ENCODE measurements at regions of chr11 and their contacts with region 1.

Region 1: GRCh38 chr11:17063171-17064002 is 14.1 kb downstream of the RPS13 start:
- DNase-seq: peak in 1 of 9 donors; percentile 65
- ATAC-seq: peak; percentile 67
- H3K4me3 ChIP-seq: no peak overlapping the region
- H3K4me3 Mint-ChIP-seq: no peak overlapping the region
- H3K27ac ChIP-seq: no peak overlapping the region
- H3K27ac Mint-ChIP-seq: no peak overlapping the region
- H3K4me1 ChIP-seq: no peaks in the 10 kb centered on the region
- H3K4me1 Mint-ChIP-seq: peaks cover 0 to 2% (median 0%) of the 10 kb centered on the region in 7 donors
- H3K27me3 ChIP-seq: no peaks in the 10 kb centered on the region
- H3K27me3 Mint-ChIP-seq: peaks cover 0 to 4% (median 0%) of the 10 kb centered on the region in 5 donors

Region 2: DNA sequence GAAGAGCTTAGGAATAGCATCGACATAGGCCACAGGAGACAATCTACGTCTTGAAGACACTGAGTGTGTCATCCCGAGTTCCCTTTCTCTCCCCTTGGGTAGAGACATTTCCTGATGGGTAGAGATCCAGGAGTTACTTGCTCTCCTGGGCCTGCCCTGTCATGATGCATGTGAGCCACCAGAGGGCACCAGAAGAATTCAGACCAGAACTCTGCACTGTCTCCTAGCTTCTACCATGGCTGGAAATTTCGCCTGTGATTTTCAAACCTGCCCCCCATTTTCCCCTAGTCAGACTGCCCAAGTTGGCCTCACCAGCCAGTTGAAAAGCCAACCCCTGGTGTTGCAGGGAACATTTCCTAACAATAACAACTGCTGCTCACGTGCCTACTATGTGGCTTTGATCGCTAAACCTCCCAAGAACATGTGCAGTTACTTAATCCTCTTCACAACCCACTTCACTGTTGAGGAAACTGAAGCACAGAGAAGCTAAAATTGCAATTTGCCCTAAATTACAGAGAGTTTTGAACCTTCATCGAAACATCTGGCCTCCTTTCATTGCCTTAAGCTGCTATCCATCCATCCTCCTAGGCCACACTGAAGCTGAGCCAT is 277.8 kb before region 1 on chr11:
- CTCF ChIA-PET with region 1: no interaction called
- POLR2A ChIA-PET with region 1: no interaction called
- intact Hi-C with region 1: loop called in 1 of 2 experiments (anchors 1 kb)
- DNase-seq: peak in 6 of 9 donors; percentile 24 to 50 (median 40)
- ATAC-seq: peak; percentile 83
- H3K4me3 ChIP-seq: no peak overlapping the region
- H3K4me3 Mint-ChIP-seq: no peak overlapping the region
- H3K27ac ChIP-seq: no peak overlapping the region
- H3K27ac Mint-ChIP-seq: no peak overlapping the region
- H3K4me1 ChIP-seq: no peaks in the 10 kb centered on the region
- H3K4me1 Mint-ChIP-seq: no peaks in the 10 kb centered on the region
- H3K27me3 ChIP-seq: no peaks in the 10 kb centered on the region
- H3K27me3 Mint-ChIP-seq: no peaks in the 10 kb centered on the region

Region 3: DNA sequence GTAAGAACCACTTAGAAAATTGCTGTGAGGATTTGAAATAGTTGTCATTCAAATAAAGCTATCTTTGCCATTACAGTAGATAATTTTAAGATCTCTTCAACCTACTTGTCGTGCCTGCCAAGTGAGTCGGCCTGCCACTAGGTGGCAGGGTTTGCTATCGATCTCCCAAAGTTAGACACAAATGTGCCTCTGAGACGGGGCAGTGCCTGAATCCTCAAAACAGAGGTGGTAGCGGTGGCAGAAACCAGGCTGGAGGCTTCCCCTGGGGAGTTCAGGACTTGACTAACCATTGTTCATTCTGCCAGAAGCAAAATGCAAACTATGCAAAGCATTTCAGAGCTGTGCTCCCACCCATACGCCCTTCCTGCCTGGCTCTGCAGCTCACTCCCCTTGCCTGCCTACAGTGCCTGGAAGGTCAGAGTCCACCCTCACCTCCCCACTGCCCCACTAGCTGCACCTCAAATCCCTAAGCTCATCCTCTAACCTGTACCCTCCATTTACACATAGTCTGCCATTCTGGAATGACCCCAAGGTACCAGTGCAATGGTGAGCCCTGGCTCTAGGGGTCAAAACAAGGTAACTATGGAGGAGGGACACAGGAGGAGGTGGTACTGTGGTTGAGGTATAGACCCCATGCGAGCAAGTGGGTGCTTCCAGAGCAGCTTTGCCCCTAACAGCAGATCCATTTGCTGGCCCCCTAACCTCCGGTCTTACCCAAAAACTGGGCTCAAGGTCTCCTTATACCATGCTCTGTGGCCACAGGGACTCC is 242.9 kb before region 1 on chr11:
- CTCF ChIA-PET with region 1: no interaction called
- POLR2A ChIA-PET with region 1: no interaction called
- intact Hi-C with region 1: loop called in 1 of 2 experiments (anchors 1 kb)
- DNase-seq: peak in 6 of 9 donors; percentile 6 to 30 (median 21)
- ATAC-seq: peak; percentile 64
- H3K4me3 ChIP-seq: no peak overlapping the region
- H3K4me3 Mint-ChIP-seq: no peak overlapping the region
- H3K27ac ChIP-seq: no peak overlapping the region
- H3K27ac Mint-ChIP-seq: no peak overlapping the region
- H3K4me1 ChIP-seq: no peaks in the 10 kb centered on the region
- H3K4me1 Mint-ChIP-seq: peaks cover 0 to 8% (median 0%) of the 10 kb centered on the region in 7 donors
- H3K27me3 ChIP-seq: no peaks in the 10 kb centered on the region
- H3K27me3 Mint-ChIP-seq: peaks cover 0 to 5% (median 0%) of the 10 kb centered on the region in 5 donors

Region 4: DNA sequence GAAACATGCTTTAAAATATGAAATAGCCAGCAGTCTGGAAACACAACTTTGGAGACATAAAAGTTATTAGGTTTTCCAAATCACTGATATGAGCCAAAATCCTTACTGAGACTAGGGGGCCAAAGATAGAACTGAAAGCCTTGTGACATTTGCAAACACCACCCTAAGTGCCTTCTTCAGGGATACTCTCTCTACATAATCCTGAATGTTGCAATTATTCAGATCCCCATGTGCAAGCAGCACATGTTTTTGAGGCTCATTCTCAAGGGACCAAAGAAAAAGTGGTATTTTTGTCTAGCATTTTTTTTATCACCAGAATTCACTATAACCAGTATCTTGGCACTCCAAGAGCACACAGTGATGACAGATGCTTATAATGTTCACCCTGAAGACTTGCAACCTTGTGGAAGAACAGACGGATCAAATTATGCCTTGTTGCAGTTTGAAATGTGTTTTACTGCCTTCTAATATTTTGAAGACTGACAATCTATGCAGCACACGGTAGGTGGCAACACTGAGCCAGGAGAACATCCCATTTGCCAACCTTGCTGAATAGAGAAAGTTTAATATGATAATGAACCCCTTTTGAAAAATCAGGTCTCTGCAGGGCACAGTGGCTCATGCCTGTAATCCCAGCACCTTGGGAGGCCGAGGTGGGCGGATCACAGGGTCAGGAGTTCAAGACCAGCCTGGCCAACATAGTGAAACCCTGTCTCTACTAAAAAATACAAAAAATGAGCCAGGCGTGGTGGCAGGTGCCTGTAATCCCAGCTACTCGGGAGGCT is 127.7 kb before region 1 on chr11:
- CTCF ChIA-PET with region 1: interaction called, 3 read pairs
- POLR2A ChIA-PET with region 1: no interaction called
- intact Hi-C with region 1: loop called (anchors 1 to 10 kb)
- DNase-seq: peak in 2 of 9 donors; percentile 3 to 6
- ATAC-seq: no peak
- H3K4me3 ChIP-seq: no peak overlapping the region
- H3K4me3 Mint-ChIP-seq: no peak overlapping the region
- H3K27ac ChIP-seq: no peak overlapping the region
- H3K27ac Mint-ChIP-seq: no peak overlapping the region
- H3K4me1 ChIP-seq: no peaks in the 10 kb centered on the region
- H3K4me1 Mint-ChIP-seq: no peaks in the 10 kb centered on the region
- H3K27me3 ChIP-seq: no peaks in the 10 kb centered on the region
- H3K27me3 Mint-ChIP-seq: peaks cover 0 to 20% (median 5%) of the 10 kb centered on the region in 5 donors

Region 5: DNA sequence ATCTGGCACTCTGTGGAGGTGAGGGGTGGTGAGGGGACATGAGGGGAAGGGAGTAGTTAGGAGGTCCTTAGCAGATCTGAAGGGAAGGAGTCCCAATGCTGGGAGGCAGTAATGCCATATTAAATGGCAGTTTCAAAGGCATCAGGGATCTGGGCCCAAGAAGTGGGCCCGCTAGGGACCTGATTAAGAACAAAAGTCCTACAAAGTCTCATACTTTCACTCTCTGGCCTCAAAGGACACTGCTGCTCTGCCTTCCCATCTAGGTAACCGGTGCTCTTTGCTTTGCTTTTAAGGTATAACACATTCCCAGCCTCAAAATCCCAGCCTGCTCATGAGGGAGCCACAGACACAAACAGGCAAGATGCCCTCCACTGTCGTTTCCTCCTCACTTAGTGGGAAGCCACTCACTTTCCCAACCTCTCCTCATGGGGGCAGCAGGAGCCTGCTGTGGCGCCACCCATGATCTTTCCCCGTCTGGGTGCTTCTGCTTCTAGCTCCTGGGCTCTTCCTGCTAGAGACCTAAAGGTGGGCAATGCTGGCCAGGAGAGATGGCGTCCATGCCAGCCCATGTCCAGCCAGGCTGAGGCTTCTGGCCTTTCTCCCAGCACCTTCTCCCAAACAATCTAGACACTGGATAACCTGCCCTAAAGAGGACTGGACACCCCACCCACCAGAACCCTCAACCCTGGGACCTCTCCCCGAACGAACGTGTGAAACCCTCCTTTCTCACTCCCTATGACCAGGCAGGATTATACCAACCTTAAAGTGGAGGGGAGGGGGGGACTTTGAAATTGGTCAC is 117.5 kb before region 1 on chr11:
- CTCF ChIA-PET with region 1: no interaction called
- POLR2A ChIA-PET with region 1: no interaction called
- intact Hi-C with region 1: loop called in 1 of 2 experiments (anchors 1 kb)
- DNase-seq: peak in 1 of 9 donors; percentile 39
- ATAC-seq: peak; percentile 58
- H3K4me3 ChIP-seq: no peak overlapping the region
- H3K4me3 Mint-ChIP-seq: no peak overlapping the region
- H3K27ac ChIP-seq: no peak overlapping the region
- H3K27ac Mint-ChIP-seq: no peak overlapping the region
- H3K4me1 ChIP-seq: no peaks in the 10 kb centered on the region
- H3K4me1 Mint-ChIP-seq: peaks cover 0 to 5% (median 0%) of the 10 kb centered on the region in 7 donors
- H3K27me3 ChIP-seq: no peaks in the 10 kb centered on the region
- H3K27me3 Mint-ChIP-seq: peaks cover 0 to 3% (median 0%) of the 10 kb centered on the region in 5 donors